CD4-positive, alpha-beta T cell (primary cell): ENCODE measurements at regions of chr16 and their contacts with region 1.

Region 1: GRCh38 chr16:57734925-57735754 is 430 bp upstream of the KATNB1 start:
- DNase-seq: peak; percentile 94 to 100 (median 96)
- ATAC-seq: peak; percentile 88
- H3K4me3 ChIP-seq: peak overlapping the region; percentile 78
- H3K4me3 Mint-ChIP-seq: peak overlapping the region; percentile 95
- H3K27ac ChIP-seq: peak overlapping the region; percentile 60 to 77
- H3K27ac Mint-ChIP-seq: peak overlapping the region; percentile 87
- H3K4me1 ChIP-seq: peaks cover 29% of the 10 kb centered on the region
- H3K4me1 Mint-ChIP-seq: peaks cover 33% of the 10 kb centered on the region
- H3K27me3 ChIP-seq: no peaks in the 10 kb centered on the region
- H3K27me3 Mint-ChIP-seq: no peaks in the 10 kb centered on the region
- CTCF ChIP-seq: no peak

Region 2: DNA sequence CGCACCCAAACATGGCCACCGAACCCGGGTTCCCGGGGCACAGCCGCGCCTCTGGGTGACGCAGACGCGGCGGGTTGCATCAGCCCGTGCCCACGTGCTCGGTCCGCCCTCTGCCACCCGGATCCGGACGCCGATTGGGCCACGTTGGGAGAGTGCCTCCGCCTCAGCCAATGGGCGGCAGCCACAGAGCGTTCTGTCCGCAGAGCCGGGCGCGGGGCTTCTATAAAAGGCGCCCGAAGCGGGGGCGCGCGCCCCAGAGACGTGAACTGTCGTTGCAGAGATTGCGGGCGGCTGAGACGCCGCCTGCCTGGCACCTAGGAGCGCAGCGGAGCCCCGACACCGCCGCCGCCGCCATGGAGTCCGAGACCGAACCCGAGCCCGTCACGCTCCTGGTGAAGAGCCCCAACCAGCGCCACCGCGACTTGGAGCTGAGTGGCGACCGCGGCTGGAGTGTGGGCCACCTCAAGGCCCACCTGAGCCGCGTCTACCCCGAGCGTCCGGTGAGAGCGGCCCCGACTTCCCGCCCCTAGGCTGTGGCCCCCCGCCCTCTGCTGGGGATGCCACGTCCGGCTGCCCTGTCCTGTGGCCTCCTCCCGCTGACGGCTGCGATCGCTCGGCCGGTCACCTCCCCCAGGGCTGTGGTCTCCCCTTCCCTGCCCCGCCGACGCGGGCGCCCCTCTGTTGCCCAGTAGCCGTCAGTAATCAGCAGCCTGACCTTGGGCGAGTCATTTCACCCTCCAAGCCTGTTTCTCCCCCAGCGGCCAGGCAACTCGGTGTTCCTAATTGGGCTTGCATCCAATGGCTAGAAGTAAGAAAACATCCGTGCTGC is 803.0 kb before region 1 on chr16 and contains the start of gene HERPUD1:
- CTCF ChIA-PET with region 1: no interaction called
- POLR2A ChIA-PET with region 1: no interaction called
- intact Hi-C with region 1: loop called in 1 of 2 experiments (anchors 10 kb)
- DNase-seq: peak; percentile 98 to 100 (median 99)
- ATAC-seq: peak; percentile 96
- H3K4me3 ChIP-seq: peak within 1 kb of the TSS; percentile 99
- H3K4me3 Mint-ChIP-seq: peak within 1 kb of the TSS; percentile 99
- H3K27ac ChIP-seq: peak within 1 kb of the TSS; percentile 81 to 93
- H3K27ac Mint-ChIP-seq: peak within 1 kb of the TSS; percentile 96
- H3K4me1 ChIP-seq: peaks cover 28% of the 10 kb centered on the region
- H3K4me1 Mint-ChIP-seq: peaks cover 39% of the 10 kb centered on the region
- H3K27me3 ChIP-seq: no peaks in the 10 kb centered on the region
- H3K27me3 Mint-ChIP-seq: no peaks in the 10 kb centered on the region
- CTCF ChIP-seq: peak; percentile 27
- total RNA-seq, gene HERPUD1: 217 to 227 TPM

Region 3: GRCh38 chr16:57447186-57447962 is 287.8 kb before region 1 on chr16 and contains the starts of genes CIAPIN1 and COQ9:
- CTCF ChIA-PET with region 1: no interaction called
- POLR2A ChIA-PET with region 1: interaction called, 4 read pairs
- intact Hi-C with region 1: loop called in 1 of 2 experiments (anchors 5 kb)
- DNase-seq: peak; percentile 83 to 97 (median 92)
- ATAC-seq: peak; percentile 99
- H3K4me3 ChIP-seq: peak within 1 kb of the TSS; percentile 96
- H3K4me3 Mint-ChIP-seq: peak within 1 kb of the TSS; percentile 96
- H3K27ac ChIP-seq: peak within 1 kb of the TSS; percentile 73 to 79
- H3K27ac Mint-ChIP-seq: peak within 1 kb of the TSS; percentile 88
- H3K4me1 ChIP-seq: peaks cover 29% of the 10 kb centered on the region
- H3K4me1 Mint-ChIP-seq: peaks cover 34% of the 10 kb centered on the region
- H3K27me3 ChIP-seq: no peaks in the 10 kb centered on the region
- H3K27me3 Mint-ChIP-seq: no peaks in the 10 kb centered on the region
- CTCF ChIP-seq: no peak
- total RNA-seq, gene CIAPIN1: 27.8 to 28.0 TPM
- total RNA-seq, gene COQ9: 7.0 to 7.6 TPM

Region 4: DNA sequence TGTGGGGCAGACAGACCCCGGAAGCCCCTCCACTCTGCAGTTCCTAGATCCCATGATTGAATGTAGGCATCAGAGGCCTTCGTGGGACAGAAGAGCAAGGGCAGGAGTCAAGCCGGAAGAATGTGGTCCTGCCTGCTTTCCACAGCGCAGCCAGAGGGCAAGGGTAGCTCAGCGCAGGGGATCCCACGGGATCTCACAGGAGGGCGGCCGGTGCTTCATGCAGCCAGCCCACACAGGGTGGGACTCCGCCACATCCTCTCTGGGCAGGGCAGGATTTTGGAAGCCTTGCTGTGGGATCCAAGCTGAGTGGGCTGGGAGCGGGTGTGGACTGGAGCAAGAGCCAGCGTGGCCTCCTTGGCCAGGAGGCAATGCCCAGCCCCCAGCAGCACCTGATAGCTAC is 13.5 kb after region 1 on chr16:
- CTCF ChIA-PET with region 1: no interaction called
- POLR2A ChIA-PET with region 1: interaction called, 10 read pairs
- intact Hi-C with region 1: no loop called
- DNase-seq: no peak
- ATAC-seq: no peak
- H3K4me3 ChIP-seq: no peak overlapping the region
- H3K4me3 Mint-ChIP-seq: no peak overlapping the region
- H3K27ac ChIP-seq: no peak overlapping the region
- H3K27ac Mint-ChIP-seq: no peak overlapping the region
- H3K4me1 ChIP-seq: no peaks in the 10 kb centered on the region
- H3K4me1 Mint-ChIP-seq: no peaks in the 10 kb centered on the region
- H3K27me3 ChIP-seq: no peaks in the 10 kb centered on the region
- H3K27me3 Mint-ChIP-seq: no peaks in the 10 kb centered on the region
- CTCF ChIP-seq: no peak

Region 5: GRCh38 chr16:57994778-57995177 is 259.6 kb after region 1 on chr16:
- CTCF ChIA-PET with region 1: interaction called, 3 read pairs
- POLR2A ChIA-PET with region 1: interaction called, 8 read pairs
- intact Hi-C with region 1: loop called (anchors 5 kb)
- DNase-seq: peak in 9 of 14 experiments; percentile 20 to 79 (median 34)
- ATAC-seq: peak; percentile 31
- H3K4me3 ChIP-seq: no peak overlapping the region
- H3K4me3 Mint-ChIP-seq: peak overlapping the region; percentile 45
- H3K27ac ChIP-seq: peak overlapping the region; percentile 48 to 53
- H3K27ac Mint-ChIP-seq: peak overlapping the region; percentile 83
- H3K4me1 ChIP-seq: peaks cover 70% of the 10 kb centered on the region
- H3K4me1 Mint-ChIP-seq: peaks cover 45% of the 10 kb centered on the region
- H3K27me3 ChIP-seq: no peaks in the 10 kb centered on the region
- H3K27me3 Mint-ChIP-seq: no peaks in the 10 kb centered on the region
- CTCF ChIP-seq: no peak

Region 6: GRCh38 chr16:58629572-58630104 is 894.5 kb after region 1 on chr16 and contains the start of gene CNOT1:
- CTCF ChIA-PET with region 1: no interaction called
- POLR2A ChIA-PET with region 1: no interaction called
- intact Hi-C with region 1: loop called in 1 of 2 experiments (anchors 10 kb)
- DNase-seq: peak; percentile 94 to 99 (median 97)
- ATAC-seq: peak; percentile 81
- H3K4me3 ChIP-seq: peak within 1 kb of the TSS; percentile 93
- H3K4me3 Mint-ChIP-seq: peak within 1 kb of the TSS; percentile 98
- H3K27ac ChIP-seq: peak within 1 kb of the TSS; percentile 99 to 100
- H3K27ac Mint-ChIP-seq: peak within 1 kb of the TSS; percentile 96
- H3K4me1 ChIP-seq: peaks cover 37% of the 10 kb centered on the region
- H3K4me1 Mint-ChIP-seq: peaks cover 28% of the 10 kb centered on the region
- H3K27me3 ChIP-seq: no peaks in the 10 kb centered on the region
- H3K27me3 Mint-ChIP-seq: no peaks in the 10 kb centered on the region
- CTCF ChIP-seq: no peak
- total RNA-seq, gene CNOT1: 164 to 184 TPM